Activated CD8-positive, alpha-beta T cell treated with anti-CD3 and anti-CD28 coated beads, Interleukin-2, amount 10 ng/mL, durations not matched to agents 7 days and 5 days (primary cell): ENCODE measurements at regions of chr1 and their contacts with region 1.

Region 1: GRCh38 chr1:145845514-145846161 is at the start of gene NUDT17:
- DNase-seq: peak; percentile 85
- ATAC-seq: peak; percentile 88
- H3K4me3 Mint-ChIP-seq: no peak within 1 kb of the TSS
- H3K27ac Mint-ChIP-seq: peak within 1 kb of the TSS; percentile 72
- H3K4me1 Mint-ChIP-seq: peaks cover 7% of the 10 kb centered on the region
- H3K27me3 Mint-ChIP-seq: no peaks in the 10 kb centered on the region
- total RNA-seq, gene NUDT17: 2.2 to 3.8 TPM

Region 2: DNA sequence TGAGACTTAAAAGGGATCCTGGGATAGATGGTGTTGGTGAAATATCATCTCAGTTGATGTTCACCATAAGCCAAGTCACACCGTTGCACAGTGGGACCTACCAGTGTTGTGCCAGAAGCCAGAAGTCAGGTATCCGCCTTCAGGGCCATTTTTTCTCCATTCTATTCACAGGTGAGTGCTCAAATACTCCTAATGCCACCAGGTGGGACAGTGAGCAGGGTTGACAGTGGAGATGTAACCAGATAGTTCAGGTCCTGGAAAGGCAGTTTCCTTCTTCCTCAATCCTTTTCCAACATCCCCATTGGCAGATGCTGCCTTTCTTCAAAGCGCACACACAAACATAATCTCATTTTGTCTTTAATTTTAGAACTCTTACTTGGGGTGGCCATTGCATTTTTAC is 114.7 kb before region 1 on chr1:
- CTCF ChIA-PET with region 1: no interaction called
- POLR2A ChIA-PET with region 1: no interaction called
- DNase-seq: no peak
- ATAC-seq: no peak
- H3K4me3 Mint-ChIP-seq: no peak overlapping the region
- H3K27ac Mint-ChIP-seq: no peak overlapping the region
- H3K4me1 Mint-ChIP-seq: peaks cover 2% of the 10 kb centered on the region
- H3K27me3 Mint-ChIP-seq: no peaks in the 10 kb centered on the region

Region 3: GRCh38 chr1:145823565-145824498 is 21.8 kb before region 1 on chr1 and contains the starts of genes POLR3C and RNF115:
- CTCF ChIA-PET with region 1: interaction called, 214 read pairs
- POLR2A ChIA-PET with region 1: interaction called, 4 read pairs
- DNase-seq: peak; percentile 94
- ATAC-seq: peak; percentile 95
- H3K4me3 Mint-ChIP-seq: peak within 1 kb of the TSS; percentile 97
- H3K27ac Mint-ChIP-seq: peak within 1 kb of the TSS; percentile 94
- H3K4me1 Mint-ChIP-seq: peaks cover 33% of the 10 kb centered on the region
- H3K27me3 Mint-ChIP-seq: no peaks in the 10 kb centered on the region
- total RNA-seq, gene POLR3C: 29.7 to 31.5 TPM
- total RNA-seq, gene RNF115: 15.1 to 15.5 TPM

Region 4: GRCh38 chr1:145879775-145880174 is 34.1 kb after region 1 on chr1:
- CTCF ChIA-PET with region 1: interaction called, 49 read pairs
- POLR2A ChIA-PET with region 1: no interaction called
- DNase-seq: no peak
- ATAC-seq: no peak
- H3K4me3 Mint-ChIP-seq: no peak overlapping the region
- H3K27ac Mint-ChIP-seq: no peak overlapping the region
- H3K4me1 Mint-ChIP-seq: peaks cover 1% of the 10 kb centered on the region
- H3K27me3 Mint-ChIP-seq: peaks cover 32% of the 10 kb centered on the region

Region 5: GRCh38 chr1:145906954-145907753 is 61.5 kb after region 1 on chr1:
- CTCF ChIA-PET with region 1: interaction called, 46 read pairs
- POLR2A ChIA-PET with region 1: interaction called, 8 read pairs
- DNase-seq: no peak
- ATAC-seq: no peak
- H3K4me3 Mint-ChIP-seq: no peak overlapping the region
- H3K27ac Mint-ChIP-seq: no peak overlapping the region
- H3K4me1 Mint-ChIP-seq: peaks cover 7% of the 10 kb centered on the region
- H3K27me3 Mint-ChIP-seq: no peaks in the 10 kb centered on the region

Region 6: GRCh38 chr1:145927063-145927886 is 81.6 kb after region 1 on chr1 and contains the start of gene RBM8A:
- CTCF ChIA-PET with region 1: interaction called, 12 read pairs
- POLR2A ChIA-PET with region 1: interaction called, 9 read pairs
- DNase-seq: peak; percentile 98
- ATAC-seq: peak; percentile 98
- H3K4me3 Mint-ChIP-seq: no peak within 1 kb of the TSS
- H3K27ac Mint-ChIP-seq: peak within 1 kb of the TSS; percentile 79
- H3K4me1 Mint-ChIP-seq: peaks cover 25% of the 10 kb centered on the region
- H3K27me3 Mint-ChIP-seq: no peaks in the 10 kb centered on the region
- total RNA-seq, gene RBM8A: 202 to 204 TPM

Region 7: GRCh38 chr1:145978854-145979759 is 133.5 kb after region 1 on chr1:
- CTCF ChIA-PET with region 1: interaction called, 56 read pairs
- POLR2A ChIA-PET with region 1: interaction called, 7 read pairs
- DNase-seq: peak; percentile 93
- ATAC-seq: peak; percentile 89
- H3K4me3 Mint-ChIP-seq: no peak overlapping the region
- H3K27ac Mint-ChIP-seq: no peak overlapping the region
- H3K4me1 Mint-ChIP-seq: peaks cover 16% of the 10 kb centered on the region
- H3K27me3 Mint-ChIP-seq: no peaks in the 10 kb centered on the region

Region 8: DNA sequence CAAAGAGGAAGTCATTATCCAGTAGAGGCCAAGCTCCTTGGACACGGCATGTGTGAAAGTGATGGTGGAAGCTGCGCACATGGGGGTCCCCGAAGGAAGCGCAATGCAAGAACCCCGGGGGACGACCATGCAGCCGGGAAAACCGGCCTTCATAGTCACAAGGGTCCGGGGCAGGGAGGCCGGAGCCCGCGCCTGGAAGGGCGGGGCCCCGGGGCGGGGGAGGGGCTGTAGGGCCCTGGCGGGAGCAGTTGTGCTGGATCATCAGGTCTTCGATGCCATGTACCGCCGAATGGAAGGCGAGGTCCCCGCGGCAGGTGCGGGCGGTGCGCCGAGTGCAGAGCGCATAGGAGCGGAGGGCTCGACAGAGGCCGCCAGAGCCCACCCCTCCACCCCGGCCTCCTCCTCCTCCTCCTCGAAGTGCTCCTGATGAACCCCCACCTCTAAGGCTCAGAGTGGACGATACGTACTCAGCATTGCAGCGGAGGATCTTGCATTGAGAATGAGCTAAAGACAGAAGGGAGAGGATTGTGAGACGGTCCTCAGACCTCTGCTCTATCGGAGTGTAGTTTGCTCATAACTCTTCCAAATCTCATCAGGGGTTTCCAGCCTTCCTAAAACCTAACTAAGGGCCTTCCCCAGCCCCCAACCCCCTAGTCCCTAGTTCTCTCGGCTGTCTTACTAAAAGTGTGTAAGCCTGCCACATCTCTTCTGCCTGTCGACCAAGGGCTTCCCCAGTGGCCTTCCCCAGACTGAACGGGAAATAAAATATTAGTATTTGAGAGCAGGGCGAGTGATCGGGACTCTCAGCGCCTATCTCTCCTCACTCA is 173.8 kb after region 1 on chr1:
- CTCF ChIA-PET with region 1: interaction called, 76 read pairs
- POLR2A ChIA-PET with region 1: no interaction called
- DNase-seq: no peak
- ATAC-seq: peak; percentile 44
- H3K4me3 Mint-ChIP-seq: no peak overlapping the region
- H3K27ac Mint-ChIP-seq: no peak overlapping the region
- H3K4me1 Mint-ChIP-seq: peaks cover 6% of the 10 kb centered on the region
- H3K27me3 Mint-ChIP-seq: peaks cover 64% of the 10 kb centered on the region